Heart right ventricle (tissue), 16 donors: ENCODE measurements at regions of chr10 and their contacts with region 1.

Region 1: GRCh38 chr10:127614484-127615017 is 65.4 kb downstream of the NPS start:
- DNase-seq: no peak
- ATAC-seq: no peak
- H3K4me3 ChIP-seq: no peak overlapping the region
- H3K27ac ChIP-seq: no peak overlapping the region
- H3K4me1 ChIP-seq: no peaks in the 10 kb centered on the region
- H3K27me3 ChIP-seq: peaks cover 0 to 5% (median 0%) of the 10 kb centered on the region in 7 donors
- CTCF ChIP-seq: no peak

Region 2: GRCh38 chr10:127657056-127657455 is 42.5 kb after region 1 on chr10:
- intact Hi-C with region 1: loop called in 1 of 10 experiments (anchors 1 kb)
- DNase-seq: no peak
- ATAC-seq: no peak
- H3K4me3 ChIP-seq: no peak overlapping the region
- H3K27ac ChIP-seq: no peak overlapping the region
- H3K4me1 ChIP-seq: no peaks in the 10 kb centered on the region
- H3K27me3 ChIP-seq: no peaks in the 10 kb centered on the region
- CTCF ChIP-seq: no peak

Region 3: GRCh38 chr10:127906548-127907377 is 292.2 kb after region 1 on chr10 and contains the start of gene PTPRE:
- intact Hi-C with region 1: no loop called
- DNase-seq: peak; percentile 70 to 83
- ATAC-seq: peak; percentile 76 to 92 (median 88)
- H3K4me3 ChIP-seq: peak within 1 kb of the TSS; percentile 66 to 92 (median 76)
- H3K27ac ChIP-seq: peak within 1 kb of the TSS; percentile 76 to 96 (median 90)
- H3K4me1 ChIP-seq: peaks cover 2 to 48% (median 33%) of the 10 kb centered on the region in 9 donors
- H3K27me3 ChIP-seq: peaks cover 0 to 6% (median 0%) of the 10 kb centered on the region in 7 donors
- CTCF ChIP-seq: peak; percentile 62 to 98 (median 81)
- total RNA-seq, gene PTPRE: 17.1 to 42.8 (median 23.0) TPM